ENCODE measurements at regions of chr2 and their contacts with region 1.

Region 1: GRCh38 chr2:128027801-128028667 is at the start of gene SAP130:
- DNase-seq: peak; percentile 99
- ATAC-seq: peak; percentile 83
- H3K4me3 Mint-ChIP-seq: peak within 1 kb of the TSS; percentile 93
- H3K27ac Mint-ChIP-seq: peak within 1 kb of the TSS; percentile 70
- H3K4me1 Mint-ChIP-seq: peaks cover 13% of the 10 kb centered on the region
- H3K27me3 Mint-ChIP-seq: no peaks in the 10 kb centered on the region
- total RNA-seq, gene SAP130: 28.2 to 35.8 TPM

Region 2: GRCh38 chr2:126657636-126658318 is 1370.3 kb before region 1 on chr2:
- CTCF ChIA-PET with region 1: no interaction called
- POLR2A ChIA-PET with region 1: no interaction called
- intact Hi-C with region 1: loop called (anchors 10 kb)
- DNase-seq: peak; percentile 87
- ATAC-seq: peak; percentile 67
- H3K4me3 Mint-ChIP-seq: peak overlapping the region; percentile 97
- H3K27ac Mint-ChIP-seq: peak overlapping the region; percentile 99
- H3K4me1 Mint-ChIP-seq: peaks cover 59% of the 10 kb centered on the region
- H3K27me3 Mint-ChIP-seq: no peaks in the 10 kb centered on the region

Region 3: DNA sequence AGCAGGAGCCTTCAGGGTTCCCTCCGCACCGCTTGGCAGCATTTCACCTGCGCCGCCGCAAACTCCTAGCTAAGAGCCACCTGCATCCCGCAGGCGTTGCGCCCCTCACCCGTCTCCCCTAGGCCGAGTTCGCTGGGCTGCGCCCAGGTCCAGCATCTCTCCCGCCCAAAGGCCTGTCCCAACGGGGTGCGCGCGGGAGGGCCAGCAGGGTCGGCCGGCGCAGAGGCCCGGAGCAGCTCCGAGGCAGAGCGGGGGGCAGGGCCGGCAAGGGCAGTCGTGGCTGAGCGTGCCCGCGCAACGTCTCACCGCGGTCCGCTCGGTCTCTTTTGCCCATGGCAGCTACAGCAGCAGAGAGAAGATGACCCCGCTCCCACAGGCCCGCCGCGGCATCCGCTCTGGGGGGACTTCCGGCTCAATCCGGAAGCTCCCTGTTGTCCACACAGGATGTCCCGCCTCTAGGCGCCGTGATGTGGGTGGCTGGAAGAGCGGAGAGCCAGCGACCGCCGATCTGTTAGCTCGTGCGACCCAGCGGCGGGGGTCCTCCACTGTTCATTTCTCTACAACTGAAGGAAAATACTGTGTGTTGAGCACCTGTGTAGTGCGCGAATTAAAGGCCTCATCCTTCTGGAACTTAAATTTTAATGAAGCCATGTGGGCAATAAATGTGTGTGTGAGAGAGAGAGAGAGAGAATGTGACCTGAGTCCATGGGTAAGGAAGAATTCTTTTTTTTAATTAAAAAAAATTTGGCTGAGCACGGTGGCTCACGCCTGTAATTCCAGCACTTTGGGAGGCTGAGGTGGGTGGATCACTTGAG is 734.1 kb before region 1 on chr2 and contains the start of gene ERCC3:
- CTCF ChIA-PET with region 1: no interaction called
- POLR2A ChIA-PET with region 1: no interaction called
- intact Hi-C with region 1: loop called in 1 of 2 experiments (anchors 2 kb)
- DNase-seq: peak; percentile 90
- ATAC-seq: peak; percentile 98
- H3K4me3 Mint-ChIP-seq: peak within 1 kb of the TSS; percentile 98
- H3K27ac Mint-ChIP-seq: peak within 1 kb of the TSS; percentile 100
- H3K4me1 Mint-ChIP-seq: peaks cover 20% of the 10 kb centered on the region
- H3K27me3 Mint-ChIP-seq: no peaks in the 10 kb centered on the region
- total RNA-seq, gene ERCC3: 49.5 to 49.8 TPM

Region 4: GRCh38 chr2:127422810-127423475 is 605.1 kb before region 1 on chr2:
- CTCF ChIA-PET with region 1: no interaction called
- POLR2A ChIA-PET with region 1: no interaction called
- intact Hi-C with region 1: no loop called
- DNase-seq: peak; percentile 38
- ATAC-seq: peak; percentile 58
- H3K4me3 Mint-ChIP-seq: peak overlapping the region; percentile 38
- H3K27ac Mint-ChIP-seq: no peak overlapping the region
- H3K4me1 Mint-ChIP-seq: peaks cover 5% of the 10 kb centered on the region
- H3K27me3 Mint-ChIP-seq: peaks cover 43% of the 10 kb centered on the region

Region 5: GRCh38 chr2:127810619-127811396 is 217.2 kb before region 1 on chr2 and contains the start of gene WDR33:
- CTCF ChIA-PET with region 1: interaction called, 3 read pairs
- POLR2A ChIA-PET with region 1: no interaction called
- intact Hi-C with region 1: loop called in 1 of 2 experiments (anchors 1 kb)
- DNase-seq: peak; percentile 97
- ATAC-seq: peak; percentile 99
- H3K4me3 Mint-ChIP-seq: peak within 1 kb of the TSS; percentile 98
- H3K27ac Mint-ChIP-seq: peak within 1 kb of the TSS; percentile 99
- H3K4me1 Mint-ChIP-seq: peaks cover 42% of the 10 kb centered on the region
- H3K27me3 Mint-ChIP-seq: no peaks in the 10 kb centered on the region
- total RNA-seq, gene WDR33: 58.6 to 76.3 TPM

Region 6: GRCh38 chr2:127874378-127875271 is 153.4 kb before region 1 on chr2:
- CTCF ChIA-PET with region 1: no interaction called
- POLR2A ChIA-PET with region 1: no interaction called
- intact Hi-C with region 1: no loop called
- DNase-seq: peak; percentile 61
- ATAC-seq: peak; percentile 96
- H3K4me3 Mint-ChIP-seq: no peak overlapping the region
- H3K27ac Mint-ChIP-seq: peak overlapping the region; percentile 81
- H3K4me1 Mint-ChIP-seq: peaks cover 34% of the 10 kb centered on the region
- H3K27me3 Mint-ChIP-seq: no peaks in the 10 kb centered on the region

Region 7: GRCh38 chr2:128090945-128091725 is 63.1 kb after region 1 on chr2 and contains the start of gene UGGT1:
- CTCF ChIA-PET with region 1: interaction called, 3 read pairs
- POLR2A ChIA-PET with region 1: no interaction called
- intact Hi-C with region 1: loop called (anchors 1 kb)
- DNase-seq: peak; percentile 96
- ATAC-seq: peak; percentile 95
- H3K4me3 Mint-ChIP-seq: peak within 1 kb of the TSS; percentile 90
- H3K27ac Mint-ChIP-seq: peak within 1 kb of the TSS; percentile 93
- H3K4me1 Mint-ChIP-seq: peaks cover 44% of the 10 kb centered on the region
- H3K27me3 Mint-ChIP-seq: no peaks in the 10 kb centered on the region
- total RNA-seq, gene UGGT1: 50.0 to 67.2 TPM

Region 8: DNA sequence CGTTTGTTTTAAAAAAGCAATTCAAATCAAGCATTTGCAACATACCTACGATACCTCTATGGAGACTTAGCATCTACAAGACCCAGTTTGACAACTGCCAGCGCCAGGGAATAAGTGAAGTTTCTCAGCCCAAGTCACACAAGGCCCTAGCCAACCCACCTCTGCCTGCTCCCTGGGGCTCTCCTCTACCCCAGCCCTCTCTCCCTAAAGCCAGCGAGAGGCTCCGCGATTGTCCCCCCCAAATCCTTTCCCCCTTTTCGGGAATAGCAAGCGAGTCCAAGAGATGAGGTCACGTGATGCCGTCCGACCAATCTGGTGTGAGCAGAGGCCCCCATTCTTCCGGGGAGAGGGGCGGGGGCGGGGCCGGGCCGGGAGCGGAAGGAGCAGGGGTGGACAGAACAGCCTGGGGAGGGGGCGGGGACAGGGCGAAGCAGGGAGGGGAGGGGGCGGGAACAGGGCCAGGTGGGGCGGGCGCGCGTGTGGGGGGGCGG is 1849.3 kb after region 1 on chr2:
- CTCF ChIA-PET with region 1: no interaction called
- POLR2A ChIA-PET with region 1: no interaction called
- intact Hi-C with region 1: loop called in 1 of 2 experiments (anchors 10 kb)
- DNase-seq: peak; percentile 90
- ATAC-seq: peak; percentile 95
- H3K4me3 Mint-ChIP-seq: peak overlapping the region; percentile 87
- H3K27ac Mint-ChIP-seq: peak overlapping the region; percentile 87
- H3K4me1 Mint-ChIP-seq: peaks cover 11% of the 10 kb centered on the region
- H3K27me3 Mint-ChIP-seq: no peaks in the 10 kb centered on the region

Measured in activated CD4-positive, alpha-beta T cell treated with anti-CD3 and anti-CD28 coated beads for 36 hours (primary cell).